ENCODE measurements at regions of chr10 and their contacts with region 1.

Region 1: DNA sequence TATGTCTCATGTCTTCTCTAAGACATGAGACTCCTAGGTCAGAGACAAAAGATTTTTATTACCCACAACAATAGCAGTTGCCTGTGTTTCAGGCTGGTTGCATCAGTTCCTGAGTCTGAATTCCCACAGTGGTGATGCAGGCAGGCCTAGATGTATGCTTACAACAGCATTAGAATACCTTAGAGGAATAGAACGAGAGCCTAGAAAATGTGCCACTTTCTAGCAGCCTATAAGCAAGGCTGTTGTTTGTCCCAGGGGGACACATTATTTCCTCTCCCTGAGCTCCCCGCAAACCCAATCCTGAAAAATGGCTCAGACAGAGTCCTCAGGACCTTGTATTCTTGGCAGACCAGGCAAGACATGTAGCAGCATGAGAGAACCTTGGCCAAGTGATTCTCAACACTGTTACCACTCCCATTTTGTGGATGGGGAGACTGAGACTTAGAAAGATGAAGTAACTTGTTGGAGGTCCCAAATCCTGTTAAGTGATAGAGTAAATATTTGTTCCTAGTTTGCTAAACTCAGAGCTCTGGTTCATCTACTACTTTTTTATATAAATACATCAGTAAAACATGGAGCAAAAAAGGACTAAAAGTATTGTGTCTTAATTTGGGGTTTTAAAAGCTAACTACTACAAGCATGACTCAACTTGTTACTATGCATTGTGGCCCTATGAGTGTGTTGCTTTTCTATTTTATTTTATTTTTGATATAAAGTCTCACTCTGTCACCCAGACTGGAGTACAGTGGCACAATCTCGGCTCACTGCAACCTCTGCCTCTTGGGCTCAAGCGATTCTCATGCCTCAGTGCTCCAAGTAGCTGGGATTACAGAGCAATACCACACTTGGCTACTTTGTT is 14.2 kb downstream of the VTI1A start:
- DNase-seq: peak; percentile 31
- H3K4me3 Mint-ChIP-seq: no peak overlapping the region
- H3K27ac Mint-ChIP-seq: peak overlapping the region; percentile 66
- H3K4me1 Mint-ChIP-seq: peaks cover 7% of the 10 kb centered on the region
- H3K27me3 Mint-ChIP-seq: no peaks in the 10 kb centered on the region

Region 2: GRCh38 chr10:112278871-112279270 is 182.4 kb before region 1 on chr10:
- CTCF ChIA-PET with region 1: no interaction called
- POLR2A ChIA-PET with region 1: no interaction called
- DNase-seq: no peak
- H3K4me3 Mint-ChIP-seq: no peak overlapping the region
- H3K27ac Mint-ChIP-seq: no peak overlapping the region
- H3K4me1 Mint-ChIP-seq: no peaks in the 10 kb centered on the region
- H3K27me3 Mint-ChIP-seq: peaks cover 12% of the 10 kb centered on the region

Region 3: GRCh38 chr10:112471878-112472487 is 10.7 kb after region 1 on chr10:
- CTCF ChIA-PET with region 1: interaction called, 21 read pairs
- POLR2A ChIA-PET with region 1: no interaction called
- DNase-seq: no peak
- H3K4me3 Mint-ChIP-seq: no peak overlapping the region
- H3K27ac Mint-ChIP-seq: no peak overlapping the region
- H3K4me1 Mint-ChIP-seq: peaks cover 3% of the 10 kb centered on the region
- H3K27me3 Mint-ChIP-seq: no peaks in the 10 kb centered on the region

Region 4: GRCh38 chr10:112613620-112614019 is 152.4 kb after region 1 on chr10:
- CTCF ChIA-PET with region 1: no interaction called
- POLR2A ChIA-PET with region 1: no interaction called
- DNase-seq: no peak
- H3K4me3 Mint-ChIP-seq: no peak overlapping the region
- H3K27ac Mint-ChIP-seq: no peak overlapping the region
- H3K4me1 Mint-ChIP-seq: no peaks in the 10 kb centered on the region
- H3K27me3 Mint-ChIP-seq: no peaks in the 10 kb centered on the region

Measured in activated CD4-positive, alpha-beta memory T cell treated with anti-CD3 and anti-CD28 coated beads, Interleukin-2, amount 10 ng/mL, durations not matched to agents 7 days and 5 days (primary cell).